ENCODE measurements at regions of chrX and their contacts with region 1.

Region 1: GRCh38 chrX:18390941-18391538 is 34.4 kb upstream of the CDKL5 start:
- DNase-seq: peak; percentile 41 to 86 (median 71)
- H3K4me3 ChIP-seq: no peak overlapping the region
- H3K27ac ChIP-seq: no peak overlapping the region
- H3K4me1 ChIP-seq: no peaks in the 10 kb centered on the region
- H3K27me3 ChIP-seq: peaks cover 5% of the 10 kb centered on the region
- CTCF ChIP-seq: peak; percentile 68 to 88 (median 78)
- POLR2A ChIP-seq: no peak

Region 2: GRCh38 chrX:18348047-18348446 is 43.0 kb before region 1 on chrX:
- intact Hi-C with region 1: no loop called
- DNase-seq: no peak
- H3K4me3 ChIP-seq: no peak overlapping the region
- H3K27ac ChIP-seq: no peak overlapping the region
- H3K4me1 ChIP-seq: no peaks in the 10 kb centered on the region
- H3K27me3 ChIP-seq: no peaks in the 10 kb centered on the region
- CTCF ChIP-seq: no peak
- POLR2A ChIP-seq: no peak

Region 3: GRCh38 chrX:19334945-19335626 is 944.0 kb after region 1 on chrX:
- intact Hi-C with region 1: loop called in 1 of 2 experiments (anchors 10 kb)
- DNase-seq: no peak
- H3K4me3 ChIP-seq: no peak overlapping the region
- H3K27ac ChIP-seq: no peak overlapping the region
- H3K4me1 ChIP-seq: no peaks in the 10 kb centered on the region
- H3K27me3 ChIP-seq: no peaks in the 10 kb centered on the region
- CTCF ChIP-seq: peak in 3 of 6 experiments; percentile 7 to 22 (median 10)
- POLR2A ChIP-seq: no peak

Measured in adrenal gland (tissue), 19 donors.